Endothelial cell of umbilical vein (primary cell): ENCODE measurements at regions of chr13 and their contacts with region 1.

Region 1: DNA sequence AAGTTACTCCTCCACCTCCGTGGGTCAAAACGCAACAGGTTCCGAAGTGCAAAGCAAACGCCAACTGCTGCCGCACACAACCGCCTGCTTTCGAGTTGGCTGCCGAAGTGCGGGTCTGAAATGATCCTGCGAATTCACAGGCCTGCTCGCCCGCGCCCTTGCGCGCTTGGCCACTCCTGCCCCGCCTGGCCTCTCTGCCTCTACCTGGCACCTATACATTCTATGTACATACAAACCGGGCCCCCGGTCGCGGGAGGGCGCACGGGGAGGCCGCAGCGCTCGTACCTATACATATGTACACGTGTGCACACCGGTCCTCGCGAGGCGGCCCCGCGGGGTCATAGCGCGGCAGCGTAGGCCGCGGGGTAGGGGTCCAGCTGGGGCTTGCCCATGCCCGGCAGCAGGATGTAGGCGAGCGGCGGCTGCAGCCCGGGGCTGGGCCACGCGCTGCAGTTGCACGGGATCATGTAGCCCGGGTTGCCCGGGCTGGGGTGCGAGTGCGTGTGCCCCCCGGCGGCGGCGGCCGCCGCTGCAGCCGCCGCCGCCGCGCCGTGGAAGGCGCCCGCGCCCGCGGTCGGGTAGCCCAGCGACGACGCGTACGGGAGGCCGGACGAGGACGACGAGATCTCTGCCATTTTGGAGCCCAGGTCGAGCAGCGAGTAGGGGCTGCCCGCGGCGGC is 1.3 kb downstream of the SOX21 start:
- DNase-seq: no peak
- H3K4me3 ChIP-seq: no peak overlapping the region
- H3K27ac ChIP-seq: no peak overlapping the region
- H3K4me1 ChIP-seq: peaks cover 12% of the 10 kb centered on the region
- H3K27me3 ChIP-seq: peaks cover 68 to 95% of the 10 kb centered on the region in 2 experiments
- CTCF ChIP-seq: peak; percentile 31 to 33
- POLR2A ChIP-seq: no peak

Region 2: GRCh38 chr13:94435604-94436226 is 275.3 kb before region 1 on chr13:
- CTCF ChIA-PET with region 1: no interaction called
- POLR2A ChIA-PET with region 1: no interaction called
- dilution Hi-C with region 1: no loop called
- intact Hi-C with region 1: loop called (anchors 1 kb)
- DNase-seq: peak; percentile 43
- H3K4me3 ChIP-seq: no peak overlapping the region
- H3K27ac ChIP-seq: no peak overlapping the region
- H3K4me1 ChIP-seq: no peaks in the 10 kb centered on the region
- H3K27me3 ChIP-seq: peaks cover 15 to 18% of the 10 kb centered on the region in 2 experiments
- CTCF ChIP-seq: peak; percentile 27 to 35
- POLR2A ChIP-seq: no peak

Region 3: DNA sequence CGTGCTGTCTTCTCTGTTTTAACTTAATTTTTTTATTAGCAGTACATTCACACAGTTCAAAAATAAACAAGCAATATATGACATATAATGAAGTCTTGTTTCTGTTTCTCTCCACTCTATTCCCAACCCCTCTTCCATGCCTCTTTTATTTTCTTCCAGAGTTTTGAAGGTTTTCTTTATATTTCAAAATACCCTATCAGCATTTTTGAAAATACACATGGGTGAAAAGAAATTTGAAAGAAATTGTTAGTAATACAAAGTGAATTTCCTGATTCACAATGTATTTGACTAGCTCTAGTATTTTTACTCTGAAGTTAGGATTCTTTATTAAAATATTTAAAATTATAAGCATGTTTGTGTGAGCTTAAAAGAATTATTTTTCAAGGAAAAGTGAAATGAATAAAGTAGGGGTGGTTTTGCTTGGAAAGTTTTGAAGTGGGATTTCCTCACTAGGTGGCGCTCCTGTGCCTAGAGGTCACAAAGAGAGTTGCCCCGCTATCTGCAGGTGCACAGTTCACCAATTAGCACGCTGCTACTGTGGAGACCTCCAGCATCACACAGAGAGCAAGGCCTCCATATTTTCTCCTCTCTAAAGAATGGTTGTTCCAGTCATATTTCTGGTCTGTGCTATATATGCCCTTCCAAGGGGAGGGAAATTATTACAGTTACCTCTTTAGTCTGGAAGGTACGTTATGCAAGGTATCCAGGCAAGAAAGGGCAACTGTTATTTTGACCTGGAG is 36.2 kb before region 1 on chr13:
- CTCF ChIA-PET with region 1: interaction called, 3 read pairs
- POLR2A ChIA-PET with region 1: no interaction called
- dilution Hi-C with region 1: no loop called
- intact Hi-C with region 1: loop called (anchors 2 kb)
- DNase-seq: peak; percentile 49
- H3K4me3 ChIP-seq: no peak overlapping the region
- H3K27ac ChIP-seq: no peak overlapping the region
- H3K4me1 ChIP-seq: no peaks in the 10 kb centered on the region
- H3K27me3 ChIP-seq: peaks cover 6 to 26% of the 10 kb centered on the region in 2 experiments
- CTCF ChIP-seq: peak; percentile 60 to 78
- POLR2A ChIP-seq: no peak

Region 4: DNA sequence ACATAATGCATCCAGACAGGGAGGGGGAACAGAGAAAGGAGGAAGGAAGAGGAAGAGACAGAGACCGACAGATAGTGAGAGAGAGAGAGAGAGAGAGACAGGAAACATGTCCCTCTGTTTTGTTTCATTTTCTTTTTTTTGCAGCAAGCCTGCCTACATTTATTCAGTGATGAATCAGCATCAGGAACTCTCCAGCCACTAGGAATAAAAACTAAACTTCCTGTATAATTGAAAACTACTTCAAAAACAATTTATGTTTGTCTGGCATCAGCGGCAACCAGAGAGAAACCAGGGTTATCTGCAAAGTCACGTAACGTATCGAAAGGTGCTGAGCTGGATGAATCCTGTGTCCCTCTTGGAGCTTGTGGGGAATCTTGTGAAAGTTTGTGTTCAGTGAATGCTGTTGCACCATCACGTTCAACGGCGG is 150.0 kb after region 1 on chr13:
- CTCF ChIA-PET with region 1: no interaction called
- POLR2A ChIA-PET with region 1: no interaction called
- dilution Hi-C with region 1: no loop called
- intact Hi-C with region 1: loop called (anchors 10 kb)
- DNase-seq: peak; percentile 80
- H3K4me3 ChIP-seq: peak overlapping the region in 2 of 3 experiments; percentile 37 to 77
- H3K27ac ChIP-seq: peak overlapping the region; percentile 91
- H3K4me1 ChIP-seq: peaks cover 43% of the 10 kb centered on the region
- H3K27me3 ChIP-seq: peaks cover 15 to 17% of the 10 kb centered on the region in 2 experiments
- CTCF ChIP-seq: no peak
- POLR2A ChIP-seq: no peak

Region 5: DNA sequence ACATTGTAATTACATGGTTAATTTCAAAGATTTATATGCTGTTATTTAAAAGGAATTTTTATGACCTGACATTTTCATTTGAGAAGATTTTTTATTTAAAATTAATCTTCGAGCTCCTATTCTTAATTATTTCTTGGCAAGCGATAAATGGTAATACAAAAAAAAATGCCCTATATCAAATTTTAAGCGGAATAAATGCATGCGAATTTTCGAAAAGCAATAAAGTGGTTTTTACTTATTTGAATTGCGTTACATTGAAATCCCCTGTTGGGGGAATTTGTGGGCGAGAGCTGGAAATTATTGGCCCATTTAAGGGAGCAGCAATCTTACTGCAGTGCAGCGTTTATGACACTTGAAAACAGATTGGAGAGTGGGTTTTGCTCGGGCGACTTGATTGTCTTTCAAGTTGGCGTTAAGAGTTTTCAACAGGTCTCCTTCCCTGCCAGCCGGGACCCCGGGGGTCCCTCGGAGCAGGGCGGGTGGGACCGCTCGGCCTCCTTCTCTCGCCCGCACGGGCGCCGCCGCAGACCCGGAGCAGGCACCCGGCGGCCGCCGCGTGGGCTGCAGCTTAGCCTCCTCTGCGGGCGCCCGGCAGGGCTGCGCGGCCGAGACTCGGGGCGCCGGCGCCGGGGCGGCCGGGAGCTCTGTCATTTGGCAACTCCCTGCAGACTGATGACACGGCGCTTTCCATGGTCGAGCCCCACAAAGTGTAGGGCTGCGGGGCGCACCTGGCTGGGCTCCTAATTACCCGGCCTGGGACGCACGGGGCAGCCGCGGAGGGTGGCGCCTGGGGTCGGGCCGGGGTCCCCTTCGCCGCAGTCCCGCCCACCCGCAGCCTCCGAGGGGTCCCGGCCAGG is 256.4 kb after region 1 on chr13:
- CTCF ChIA-PET with region 1: interaction called, 3 read pairs
- POLR2A ChIA-PET with region 1: no interaction called
- dilution Hi-C with region 1: no loop called
- intact Hi-C with region 1: loop called (anchors 5 kb)
- DNase-seq: peak; percentile 12
- H3K4me3 ChIP-seq: peak overlapping the region in 1 of 3 experiments; percentile 19
- H3K27ac ChIP-seq: no peak overlapping the region
- H3K4me1 ChIP-seq: peaks cover 6% of the 10 kb centered on the region
- H3K27me3 ChIP-seq: peaks cover 56 to 99% of the 10 kb centered on the region in 2 experiments
- CTCF ChIP-seq: no peak
- POLR2A ChIP-seq: no peak

Region 6: GRCh38 chr13:95676762-95677563 is 965.9 kb after region 1 on chr13 and contains the start of gene DNAJC3:
- CTCF ChIA-PET with region 1: no interaction called
- POLR2A ChIA-PET with region 1: no interaction called
- dilution Hi-C with region 1: no loop called
- intact Hi-C with region 1: loop called (anchors 2 kb)
- DNase-seq: peak; percentile 99
- H3K4me3 ChIP-seq: peak within 1 kb of the TSS; percentile 57 to 89 (median 71)
- H3K27ac ChIP-seq: peak within 1 kb of the TSS; percentile 68
- H3K4me1 ChIP-seq: peaks cover 23% of the 10 kb centered on the region
- H3K27me3 ChIP-seq: no peaks in the 10 kb centered on the region
- CTCF ChIP-seq: no peak
- POLR2A ChIP-seq: peak; percentile 73
- total RNA-seq, gene DNAJC3: 48.6 and 51.2 TPM in 2 replicates